Endothelial cell of umbilical vein (primary cell): ENCODE measurements at regions of chr1 and their contacts with region 1.

Region 1: GRCh38 chr1:194975907-194976306 is 1632.3 kb downstream of the KCNT2 start:
- DNase-seq: no peak
- H3K4me3 ChIP-seq: no peak overlapping the region
- H3K27ac ChIP-seq: no peak overlapping the region
- H3K4me1 ChIP-seq: no peaks in the 10 kb centered on the region
- H3K27me3 ChIP-seq: no peaks in the 10 kb centered on the region
- CTCF ChIP-seq: no peak
- POLR2A ChIP-seq: no peak

Region 2: GRCh38 chr1:194167956-194168640 is 807.8 kb before region 1 on chr1:
- CTCF ChIA-PET with region 1: no interaction called
- POLR2A ChIA-PET with region 1: interaction called, 11 read pairs
- dilution Hi-C with region 1: no loop called
- intact Hi-C with region 1: no loop called
- DNase-seq: no peak
- H3K4me3 ChIP-seq: no peak overlapping the region
- H3K27ac ChIP-seq: no peak overlapping the region
- H3K4me1 ChIP-seq: no peaks in the 10 kb centered on the region
- H3K27me3 ChIP-seq: no peaks in the 10 kb centered on the region
- CTCF ChIP-seq: no peak
- POLR2A ChIP-seq: no peak

Region 3: GRCh38 chr1:195005338-195005737 is 29.4 kb after region 1 on chr1:
- CTCF ChIA-PET with region 1: no interaction called
- POLR2A ChIA-PET with region 1: no interaction called
- dilution Hi-C with region 1: no loop called
- intact Hi-C with region 1: no loop called
- DNase-seq: no peak
- H3K4me3 ChIP-seq: no peak overlapping the region
- H3K27ac ChIP-seq: no peak overlapping the region
- H3K4me1 ChIP-seq: no peaks in the 10 kb centered on the region
- H3K27me3 ChIP-seq: no peaks in the 10 kb centered on the region
- CTCF ChIP-seq: no peak
- POLR2A ChIP-seq: no peak